PC-9 (cell line): ENCODE measurements at regions of chr4 and their contacts with region 1.

Region 1: GRCh38 chr4:74133786-74134499 is 24.0 kb upstream of the MTHFD2L start:
- DNase-seq: peak; percentile 46 to 56
- H3K4me3 ChIP-seq: no peak overlapping the region
- H3K27ac ChIP-seq: no peak overlapping the region
- H3K4me1 ChIP-seq: no peaks in the 10 kb centered on the region
- H3K27me3 ChIP-seq: no peaks in the 10 kb centered on the region
- CTCF ChIP-seq: peak; percentile 81

Region 2: DNA sequence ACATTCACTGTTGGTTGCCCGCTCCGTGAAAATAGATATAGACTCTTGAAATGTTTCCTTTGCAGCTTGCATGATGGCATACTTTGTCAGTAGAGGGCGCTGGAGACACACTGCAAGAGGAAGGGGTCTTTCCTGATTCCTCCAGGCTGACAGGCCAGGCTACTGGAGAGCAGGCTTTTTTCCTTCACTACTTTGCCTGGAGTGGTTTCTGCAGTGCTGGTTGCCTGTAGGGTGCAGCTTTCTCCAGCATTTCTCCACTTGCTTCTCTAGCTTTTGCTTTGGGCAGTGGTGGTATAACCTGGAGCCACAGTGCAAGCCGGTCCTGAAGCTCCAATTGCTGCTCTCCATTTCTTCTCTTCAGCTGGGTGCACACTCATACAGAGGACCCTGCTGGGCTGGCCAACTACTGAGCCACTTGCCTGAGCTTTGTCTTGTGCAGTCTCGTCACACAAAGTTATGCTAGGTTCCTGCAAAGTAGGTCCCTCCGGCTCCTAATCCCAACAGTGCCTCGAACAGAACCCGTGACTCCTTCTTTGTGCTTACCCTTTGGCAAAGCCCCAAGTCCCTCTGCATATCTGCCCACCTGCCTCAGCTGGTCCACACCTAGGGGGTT is 560.0 kb before region 1 on chr4:
- CTCF ChIA-PET with region 1: no interaction called
- POLR2A ChIA-PET with region 1: no interaction called
- intact Hi-C with region 1: loop called (anchors 5 kb)
- DNase-seq: peak in 1 of 2 experiments; percentile 44
- H3K4me3 ChIP-seq: no peak overlapping the region
- H3K27ac ChIP-seq: no peak overlapping the region
- H3K4me1 ChIP-seq: no peaks in the 10 kb centered on the region
- H3K27me3 ChIP-seq: no peaks in the 10 kb centered on the region
- CTCF ChIP-seq: peak; percentile 72

Region 3: GRCh38 chr4:73662709-73663546 is 471.0 kb before region 1 on chr4:
- CTCF ChIA-PET with region 1: no interaction called
- POLR2A ChIA-PET with region 1: no interaction called
- intact Hi-C with region 1: loop called (anchors 1 kb)
- DNase-seq: no peak
- H3K4me3 ChIP-seq: no peak overlapping the region
- H3K27ac ChIP-seq: no peak overlapping the region
- H3K4me1 ChIP-seq: no peaks in the 10 kb centered on the region
- H3K27me3 ChIP-seq: no peaks in the 10 kb centered on the region
- CTCF ChIP-seq: peak; percentile 72

Region 4: GRCh38 chr4:74038161-74039064 is 95.5 kb before region 1 on chr4 and contains the start of gene CXCL3:
- CTCF ChIA-PET with region 1: no interaction called
- POLR2A ChIA-PET with region 1: no interaction called
- intact Hi-C with region 1: loop called (anchors 5 kb)
- DNase-seq: peak in 1 of 2 experiments; percentile 44
- H3K4me3 ChIP-seq: peak within 1 kb of the TSS; percentile 79
- H3K27ac ChIP-seq: no peak within 1 kb of the TSS
- H3K4me1 ChIP-seq: peaks cover 6% of the 10 kb centered on the region; the same call in 1 of the 2 replicates
- H3K27me3 ChIP-seq: no peaks in the 10 kb centered on the region
- CTCF ChIP-seq: peak; percentile 50; the same call in 1 of the 2 replicates
- total RNA-seq, gene CXCL3: not detected in 2 replicates

Region 5: GRCh38 chr4:74278490-74278889 is 144.5 kb after region 1 on chr4:
- CTCF ChIA-PET with region 1: no interaction called
- POLR2A ChIA-PET with region 1: no interaction called
- intact Hi-C with region 1: no loop called
- DNase-seq: no peak
- H3K4me3 ChIP-seq: no peak overlapping the region
- H3K27ac ChIP-seq: no peak overlapping the region
- H3K4me1 ChIP-seq: peaks cover 9% of the 10 kb centered on the region
- H3K27me3 ChIP-seq: no peaks in the 10 kb centered on the region
- CTCF ChIP-seq: no peak